Naive thymus-derived CD8-positive, alpha-beta T cell (primary cell): ENCODE measurements at regions of chr6 and their contacts with region 1.

Region 1: DNA sequence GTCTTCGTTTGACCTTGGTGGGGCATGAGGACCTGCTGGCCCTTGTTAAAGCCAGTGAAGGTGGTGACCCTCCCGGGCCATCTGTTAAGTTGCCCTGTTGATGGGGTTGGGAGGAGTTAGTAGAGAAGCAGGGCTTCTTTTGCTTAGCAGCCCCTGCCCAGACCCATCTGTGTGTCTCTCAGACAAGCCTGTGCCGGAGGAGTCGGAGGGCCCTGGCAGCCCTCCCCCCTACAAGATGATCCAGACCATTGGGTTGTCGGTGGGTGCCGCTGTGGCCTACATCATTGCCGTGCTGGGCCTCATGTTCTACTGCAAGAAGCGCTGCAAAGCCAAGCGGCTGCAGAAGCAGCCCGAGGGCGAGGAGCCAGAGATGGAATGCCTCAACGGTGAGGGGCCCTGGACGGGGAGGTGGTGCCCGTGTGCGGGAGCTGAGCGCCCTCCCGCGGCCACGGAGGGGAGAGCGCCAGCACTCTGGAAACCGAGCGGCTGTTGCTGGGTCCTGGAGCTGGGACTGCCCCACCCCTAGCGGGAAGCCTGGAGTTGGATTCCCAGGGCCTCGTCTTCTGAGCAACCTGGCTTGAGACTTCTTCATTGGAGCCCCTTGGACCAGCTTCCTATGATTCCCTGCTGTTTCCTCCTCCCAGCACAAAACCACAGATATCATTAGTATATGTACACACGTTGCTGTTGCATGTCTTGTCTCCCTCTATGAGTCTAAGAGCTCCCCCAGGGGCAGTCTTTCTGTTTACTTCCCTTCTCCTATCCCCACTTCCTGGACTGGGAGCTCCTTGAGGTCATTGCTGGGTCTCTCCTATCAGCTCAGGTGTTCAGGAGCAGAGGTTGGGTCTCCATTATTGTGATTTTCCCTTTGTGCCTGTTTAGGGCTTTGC is 27.6 kb upstream of the SRF start:
- DNase-seq: peak; percentile 72 to 89 (median 82)
- ATAC-seq: peak; percentile 73 to 80
- H3K4me3 Mint-ChIP-seq: peak overlapping the region; percentile 14 to 94 (median 89)
- H3K27ac Mint-ChIP-seq: peak overlapping the region; percentile 52 to 100 (median 99)
- H3K4me1 Mint-ChIP-seq: peaks cover 16 to 40% (median 31%) of the 10 kb centered on the region in 4 donors
- H3K27me3 Mint-ChIP-seq: no peaks in the 10 kb centered on the region

Region 2: GRCh38 chr6:42879372-42880239 is 263.9 kb before region 1 on chr6 and contains the start of gene RPL7L1:
- POLR2A ChIA-PET with region 1: interaction called, 12 read pairs
- DNase-seq: peak; percentile 67 to 93 (median 83)
- ATAC-seq: peak; percentile 92 to 93
- H3K4me3 Mint-ChIP-seq: peak within 1 kb of the TSS; percentile 92 to 100 (median 97)
- H3K27ac Mint-ChIP-seq: peak within 1 kb of the TSS; percentile 98 to 100 (median 100)
- H3K4me1 Mint-ChIP-seq: peaks cover 9 to 37% (median 35%) of the 10 kb centered on the region in 4 donors
- H3K27me3 Mint-ChIP-seq: no peaks in the 10 kb centered on the region
- polyA plus RNA-seq, gene RPL7L1: 65.3 to 87.9 (median 67.4) TPM

Region 3: GRCh38 chr6:42901536-42901957 is 241.9 kb before region 1 on chr6:
- POLR2A ChIA-PET with region 1: interaction called, 32 read pairs
- DNase-seq: peak; percentile 21 to 84 (median 70)
- ATAC-seq: peak; percentile 90 to 96
- H3K4me3 Mint-ChIP-seq: peak overlapping the region in 2 of 10 donors; percentile 26 to 28
- H3K27ac Mint-ChIP-seq: no peak overlapping the region
- H3K4me1 Mint-ChIP-seq: peaks cover 0 to 14% (median 11%) of the 10 kb centered on the region in 4 donors
- H3K27me3 Mint-ChIP-seq: no peaks in the 10 kb centered on the region

Region 4: DNA sequence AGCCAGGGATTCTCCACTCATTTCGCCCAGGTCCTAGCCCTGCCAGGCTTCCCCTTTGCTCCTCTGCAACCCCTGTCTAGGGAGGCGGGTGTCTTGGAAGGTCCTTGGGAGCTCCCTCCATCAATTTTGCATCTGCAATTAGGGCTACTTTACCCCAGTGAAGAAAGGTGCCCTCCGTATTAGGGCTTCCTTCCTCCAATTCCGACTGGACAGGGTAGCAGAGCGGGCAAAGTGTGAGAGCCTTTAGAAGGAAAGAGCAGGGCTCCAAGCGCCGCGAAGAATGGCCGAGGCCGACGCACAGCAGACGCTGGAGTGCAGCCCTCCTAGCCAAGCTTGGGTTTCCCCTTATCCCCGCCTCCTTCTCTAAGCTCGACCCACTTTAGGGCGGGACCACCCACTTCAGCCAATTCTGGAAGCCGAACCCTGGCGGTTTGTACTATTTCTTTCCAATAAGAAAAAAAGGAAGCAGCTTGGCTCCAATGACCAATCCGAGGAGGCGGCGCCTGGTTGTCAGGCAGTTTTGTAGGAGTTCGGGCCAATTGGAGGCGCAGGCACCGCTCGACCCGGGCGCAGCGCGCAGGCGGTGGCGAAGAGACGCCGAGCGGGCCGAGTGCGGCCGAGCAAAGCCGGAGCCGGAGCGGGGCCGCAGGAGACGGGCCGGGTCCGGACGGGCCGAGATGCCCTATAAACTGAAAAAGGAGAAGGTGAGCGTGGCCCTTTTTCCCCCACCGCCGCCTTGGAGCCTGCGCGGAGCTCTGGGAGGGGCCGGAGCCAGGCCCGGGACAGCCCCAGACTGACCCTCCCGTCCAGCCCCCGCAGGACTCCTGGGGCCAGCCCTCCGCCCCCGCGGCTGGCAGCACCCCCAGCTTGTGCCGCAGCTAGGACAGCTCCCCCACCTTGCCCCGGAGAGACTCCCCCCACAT is 159.2 kb before region 1 on chr6 and contains the start of gene PPP2R5D:
- POLR2A ChIA-PET with region 1: interaction called, 13 read pairs
- DNase-seq: peak; percentile 86 to 99 (median 97)
- ATAC-seq: peak; percentile 93
- H3K4me3 Mint-ChIP-seq: peak within 1 kb of the TSS; percentile 91 to 99 (median 94)
- H3K27ac Mint-ChIP-seq: peak within 1 kb of the TSS; percentile 96 to 99 (median 97)
- H3K4me1 Mint-ChIP-seq: peaks cover 40 to 66% (median 62%) of the 10 kb centered on the region in 4 donors
- H3K27me3 Mint-ChIP-seq: no peaks in the 10 kb centered on the region
- polyA plus RNA-seq, gene PPP2R5D: 11.6 to 29.8 (median 17.6) TPM

Region 5: DNA sequence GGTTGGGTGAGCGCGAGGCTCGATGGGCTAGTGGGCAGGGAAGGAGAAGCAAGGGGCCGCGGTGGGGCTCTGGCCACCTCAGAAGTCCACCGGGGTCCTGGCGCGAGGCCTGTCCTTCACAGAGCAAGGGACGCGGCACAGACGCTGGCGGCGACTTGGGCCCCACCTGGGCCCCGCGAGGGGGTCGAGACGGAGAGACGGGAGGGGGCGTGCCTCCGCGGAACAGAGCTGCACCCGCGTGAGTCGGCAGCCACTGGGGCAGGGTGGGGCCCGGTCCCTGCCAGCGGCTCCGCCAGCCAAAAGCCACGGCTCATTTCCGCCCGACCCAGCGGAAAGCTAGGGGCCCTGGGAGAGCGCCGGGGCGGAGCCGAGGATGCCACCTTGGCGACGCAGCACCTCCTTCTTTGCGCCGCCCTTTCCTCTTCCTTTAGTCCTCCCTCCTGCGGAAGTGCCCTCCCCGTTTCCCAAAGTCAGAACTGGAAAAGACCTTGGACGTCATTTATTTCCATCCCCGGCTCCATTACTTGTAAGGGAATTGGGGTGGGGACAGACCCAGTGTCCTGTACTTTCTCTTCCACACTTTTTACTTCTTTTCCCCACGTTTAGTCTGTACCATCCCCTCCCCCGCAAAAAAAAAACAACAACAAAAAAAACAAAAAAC is 89.8 kb before region 1 on chr6 and contains the start of gene CUL7:
- POLR2A ChIA-PET with region 1: interaction called, 12 read pairs
- DNase-seq: peak; percentile 81 to 94 (median 86)
- ATAC-seq: peak; percentile 99
- H3K4me3 Mint-ChIP-seq: peak within 1 kb of the TSS; percentile 88 to 97 (median 94)
- H3K27ac Mint-ChIP-seq: peak within 1 kb of the TSS; percentile 80 to 98 (median 96)
- H3K4me1 Mint-ChIP-seq: peaks cover 34 to 54% (median 53%) of the 10 kb centered on the region in 4 donors
- H3K27me3 Mint-ChIP-seq: no peaks in the 10 kb centered on the region
- polyA plus RNA-seq, gene CUL7: 1.6 to 3.5 (median 1.6) TPM

Region 6: DNA sequence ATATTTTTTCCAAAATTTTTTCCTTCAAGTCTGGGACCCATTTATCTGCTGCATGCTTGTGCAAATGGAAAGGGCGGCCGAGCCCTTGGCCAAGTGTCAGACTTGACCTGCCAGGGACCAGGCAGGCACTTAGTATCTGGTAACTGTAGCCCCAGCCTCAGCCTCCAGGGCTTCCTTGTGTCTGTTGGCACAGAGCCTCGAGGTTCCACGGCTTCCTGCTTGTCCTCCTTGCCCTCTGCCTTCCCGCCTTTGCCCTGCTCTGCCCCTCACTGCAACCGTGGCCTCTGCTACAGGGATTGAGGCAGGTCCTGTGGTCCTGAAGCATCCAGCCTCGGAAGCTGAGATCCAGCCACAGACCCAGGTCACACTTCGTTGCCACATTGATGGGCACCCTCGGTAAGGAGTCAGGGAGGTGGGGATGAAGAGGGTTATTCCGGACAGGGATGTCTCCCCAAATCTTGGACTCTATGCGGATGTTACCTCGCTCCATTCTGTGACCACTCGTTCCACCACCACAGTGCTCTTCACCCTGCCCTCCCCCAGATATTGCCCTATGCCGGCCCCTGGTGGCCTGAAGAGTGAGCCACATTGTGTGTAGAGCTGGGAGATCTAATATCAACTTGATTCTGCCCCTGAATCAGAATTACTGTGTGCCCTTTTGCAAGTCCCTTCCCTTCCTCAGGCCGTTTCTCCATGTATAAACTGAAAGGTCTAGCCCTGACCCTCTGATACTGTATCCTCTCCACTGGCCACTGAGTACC is 13.9 kb before region 1 on chr6:
- POLR2A ChIA-PET with region 1: no interaction called
- DNase-seq: peak in 2 of 10 donors; percentile 7 to 11
- ATAC-seq: peak in 1 of 2 donors; percentile 66
- H3K4me3 Mint-ChIP-seq: no peak overlapping the region
- H3K27ac Mint-ChIP-seq: peak overlapping the region in 1 of 10 donors; percentile 70
- H3K4me1 Mint-ChIP-seq: peaks cover 0 to 1% (median 0%) of the 10 kb centered on the region in 4 donors
- H3K27me3 Mint-ChIP-seq: peaks cover 0 to 1% (median 0%) of the 10 kb centered on the region in 5 donors